ENCODE measurements at regions of chr3 and their contacts with region 1.

Region 1: DNA sequence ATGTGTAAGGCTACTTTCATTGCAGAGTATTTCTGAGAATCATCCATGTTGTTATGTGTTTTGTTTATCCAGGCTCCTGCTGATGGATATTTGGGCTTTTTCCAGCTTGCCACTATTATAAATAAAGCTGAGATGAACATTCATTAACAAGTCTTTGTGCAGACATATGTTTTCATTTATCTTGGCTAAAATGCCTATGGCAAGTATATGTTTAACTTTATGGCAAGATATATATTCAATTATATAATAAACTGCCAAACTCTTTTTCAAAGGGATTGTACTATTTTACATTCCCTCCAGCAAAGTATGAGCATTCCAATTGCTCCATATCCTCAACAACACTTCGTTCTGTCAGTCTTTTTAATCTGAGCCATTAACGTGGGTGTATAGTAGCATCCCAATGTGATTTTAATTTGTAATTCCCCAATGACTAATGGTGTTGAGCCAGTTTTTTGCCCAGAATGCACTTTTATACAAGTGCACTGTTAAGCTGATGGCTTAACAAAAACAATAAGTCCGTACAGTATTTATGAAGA is 452.4 kb downstream of the SHQ1 start:
- DNase-seq: no peak
- H3K4me3 ChIP-seq: no peak overlapping the region
- H3K27ac ChIP-seq: no peak overlapping the region
- H3K4me1 ChIP-seq: peaks cover 4 to 30% (median 17%) of the 10 kb centered on the region in 4 experiments
- H3K27me3 ChIP-seq: no peaks in the 10 kb centered on the region

Region 2: GRCh38 chr3:72347819-72348319 is 48.0 kb before region 1 on chr3:
- CTCF ChIA-PET with region 1: interaction called, 10 read pairs
- POLR2A ChIA-PET with region 1: no interaction called
- DNase-seq: peak; percentile 94 to 99 (median 98)
- H3K4me3 ChIP-seq: peak overlapping the region in 3 of 7 experiments; percentile 26 to 36 (median 31)
- H3K27ac ChIP-seq: peak overlapping the region; percentile 25 to 83
- H3K4me1 ChIP-seq: peaks cover 21 to 75% (median 63%) of the 10 kb centered on the region in 4 experiments
- H3K27me3 ChIP-seq: no peaks in the 10 kb centered on the region

Region 3: GRCh38 chr3:72405943-72406566 is 10.2 kb after region 1 on chr3:
- CTCF ChIA-PET with region 1: interaction called, 10 read pairs
- POLR2A ChIA-PET with region 1: no interaction called
- DNase-seq: no peak
- H3K4me3 ChIP-seq: no peak overlapping the region
- H3K27ac ChIP-seq: no peak overlapping the region
- H3K4me1 ChIP-seq: peaks cover 13 to 66% (median 45%) of the 10 kb centered on the region in 4 experiments
- H3K27me3 ChIP-seq: no peaks in the 10 kb centered on the region

Region 4: GRCh38 chr3:72453686-72454085 is 57.8 kb after region 1 on chr3:
- CTCF ChIA-PET with region 1: no interaction called
- POLR2A ChIA-PET with region 1: no interaction called
- DNase-seq: no peak
- H3K4me3 ChIP-seq: no peak overlapping the region
- H3K27ac ChIP-seq: no peak overlapping the region
- H3K4me1 ChIP-seq: peaks cover 0 to 9% (median 7%) of the 10 kb centered on the region in 4 experiments
- H3K27me3 ChIP-seq: no peaks in the 10 kb centered on the region

Region 5: GRCh38 chr3:72907731-72908620 is 512.1 kb after region 1 on chr3:
- CTCF ChIA-PET with region 1: no interaction called
- POLR2A ChIA-PET with region 1: no interaction called
- DNase-seq: no peak
- H3K4me3 ChIP-seq: no peak overlapping the region
- H3K27ac ChIP-seq: no peak overlapping the region
- H3K4me1 ChIP-seq: no peaks in the 10 kb centered on the region
- H3K27me3 ChIP-seq: peaks cover 0 to 3% (median 0%) of the 10 kb centered on the region in 5 experiments